ENCODE measurements at regions of chr22 and their contacts with region 1.

Region 1: DNA sequence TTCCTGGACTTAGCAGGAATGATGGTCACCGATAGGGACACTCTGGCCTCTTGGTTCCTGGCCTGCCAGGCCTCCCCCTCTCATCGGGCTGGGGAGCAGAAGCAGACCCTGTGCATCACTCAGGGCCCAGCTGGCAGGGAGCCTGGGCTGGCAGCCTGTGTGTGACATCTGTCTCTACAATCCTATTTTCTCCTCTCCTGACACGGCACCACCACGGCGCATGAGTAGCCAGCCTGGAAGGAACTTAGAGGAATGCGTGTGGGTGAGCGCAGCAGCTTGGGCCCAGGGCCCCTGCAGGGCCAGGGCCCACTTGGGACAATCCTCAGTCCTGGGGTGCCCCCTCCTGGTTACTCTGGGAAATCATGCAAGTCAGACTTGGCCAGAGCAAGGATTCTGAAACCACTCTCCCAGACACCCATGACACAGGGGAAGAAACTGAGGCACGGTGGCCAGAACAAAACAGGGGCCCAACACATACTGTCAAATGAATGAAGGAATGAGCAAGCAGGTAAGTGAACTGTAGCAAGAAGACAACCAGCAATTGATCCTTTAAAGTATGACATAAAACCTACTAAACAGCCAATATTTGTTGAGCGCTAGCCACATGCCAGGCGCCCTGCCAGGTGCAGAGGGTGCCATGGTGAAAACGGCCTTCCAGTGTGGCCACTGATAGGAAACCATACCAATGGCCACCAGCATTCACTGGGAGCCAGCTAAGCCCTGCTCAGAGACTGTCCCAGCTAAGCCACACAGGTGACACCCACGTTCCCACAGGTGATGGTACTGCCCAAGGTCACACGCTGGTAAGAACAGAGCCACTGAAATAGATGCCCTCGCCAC is 13.3 kb downstream of the RSPH14 start:
- DNase-seq: peak; percentile 64
- ATAC-seq: peak; percentile 99
- H3K4me3 Mint-ChIP-seq: no peak overlapping the region
- H3K27ac Mint-ChIP-seq: no peak overlapping the region
- H3K4me1 Mint-ChIP-seq: peaks cover 4% of the 10 kb centered on the region
- H3K27me3 Mint-ChIP-seq: no peaks in the 10 kb centered on the region
- CTCF ChIP-seq: no peak

Region 2: GRCh38 chr22:23281406-23282088 is 153.1 kb after region 1 on chr22:
- CTCF ChIA-PET with region 1: interaction called, 4 read pairs
- POLR2A ChIA-PET with region 1: no interaction called
- intact Hi-C with region 1: loop called (anchors 5 kb)
- DNase-seq: peak; percentile 78
- ATAC-seq: peak; percentile 85
- H3K4me3 Mint-ChIP-seq: no peak overlapping the region
- H3K27ac Mint-ChIP-seq: no peak overlapping the region
- H3K4me1 Mint-ChIP-seq: peaks cover 16% of the 10 kb centered on the region
- H3K27me3 Mint-ChIP-seq: no peaks in the 10 kb centered on the region
- CTCF ChIP-seq: no peak

Region 3: DNA sequence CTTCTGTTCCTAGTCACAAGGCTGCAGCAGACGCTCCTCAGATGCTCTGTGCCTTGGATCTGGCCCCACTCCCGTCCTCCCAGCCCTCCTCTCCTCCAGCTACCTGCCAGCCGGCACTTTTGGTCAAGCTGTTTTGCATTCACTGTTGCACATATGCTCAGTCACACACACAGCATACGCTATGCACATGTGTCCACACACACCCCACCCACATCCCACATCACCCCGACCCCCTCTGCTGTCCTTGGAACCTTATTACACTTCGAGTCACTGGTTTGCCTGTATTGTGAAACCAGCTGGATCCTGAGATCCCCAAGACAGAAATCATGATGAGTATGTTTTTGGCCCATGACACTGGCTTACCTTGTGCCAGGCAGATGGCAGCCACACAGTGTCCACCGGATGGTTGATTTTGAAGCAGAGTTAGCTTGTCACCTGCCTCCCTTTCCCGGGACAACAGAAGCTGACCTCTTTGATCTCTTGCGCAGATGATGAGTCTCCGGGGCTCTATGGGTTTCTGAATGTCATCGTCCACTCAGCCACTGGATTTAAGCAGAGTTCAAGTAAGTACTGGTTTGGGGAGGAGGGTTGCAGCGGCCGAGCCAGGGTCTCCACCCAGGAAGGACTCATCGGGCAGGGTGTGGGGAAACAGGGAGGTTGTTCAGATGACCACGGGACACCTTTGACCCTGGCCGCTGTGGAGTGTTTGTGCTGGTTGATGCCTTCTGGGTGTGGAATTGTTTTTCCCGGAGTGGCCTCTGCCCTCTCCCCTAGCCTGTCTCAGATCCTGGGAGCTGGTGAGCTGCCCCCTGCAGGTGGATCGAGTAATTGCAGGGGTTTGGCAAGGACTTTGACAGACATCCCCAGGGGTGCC is 161.6 kb after region 1 on chr22:
- CTCF ChIA-PET with region 1: no interaction called
- POLR2A ChIA-PET with region 1: no interaction called
- intact Hi-C with region 1: loop called (anchors 1 kb)
- DNase-seq: peak; percentile 39
- ATAC-seq: peak; percentile 61
- H3K4me3 Mint-ChIP-seq: no peak overlapping the region
- H3K27ac Mint-ChIP-seq: no peak overlapping the region
- H3K4me1 Mint-ChIP-seq: no peaks in the 10 kb centered on the region
- H3K27me3 Mint-ChIP-seq: no peaks in the 10 kb centered on the region
- CTCF ChIP-seq: peak; percentile 34

Region 4: GRCh38 chr22:23385291-23386244 is 257.1 kb after region 1 on chr22:
- CTCF ChIA-PET with region 1: interaction called, 6 read pairs
- POLR2A ChIA-PET with region 1: no interaction called
- intact Hi-C with region 1: loop called (anchors 1 kb)
- DNase-seq: peak; percentile 80
- ATAC-seq: peak; percentile 87
- H3K4me3 Mint-ChIP-seq: no peak overlapping the region
- H3K27ac Mint-ChIP-seq: no peak overlapping the region
- H3K4me1 Mint-ChIP-seq: no peaks in the 10 kb centered on the region
- H3K27me3 Mint-ChIP-seq: peaks cover 14% of the 10 kb centered on the region
- CTCF ChIP-seq: peak; percentile 92